Activated CD8-positive, alpha-beta memory T cell treated with anti-CD3 and anti-CD28 coated beads, Interleukin-2, amount 10 ng/mL, durations not matched to agents 7 days and 5 days (primary cell): ENCODE measurements at regions of chr14 and their contacts with region 1.

Region 1: GRCh38 chr14:22822571-22823098 is 7.1 kb upstream of the MRPL52 start:
- DNase-seq: peak; percentile 81
- ATAC-seq: peak; percentile 94
- H3K4me3 Mint-ChIP-seq: peak overlapping the region; percentile 30
- H3K27ac Mint-ChIP-seq: no peak overlapping the region
- H3K4me1 Mint-ChIP-seq: peaks cover 29% of the 10 kb centered on the region
- H3K27me3 Mint-ChIP-seq: peaks cover 28% of the 10 kb centered on the region

Region 2: GRCh38 chr14:22556990-22557623 is 265.5 kb before region 1 on chr14:
- CTCF ChIA-PET with region 1: interaction called, 11 read pairs
- DNase-seq: peak; percentile 95
- ATAC-seq: peak; percentile 34
- H3K4me3 Mint-ChIP-seq: peak overlapping the region; percentile 68
- H3K27ac Mint-ChIP-seq: peak overlapping the region; percentile 94
- H3K4me1 Mint-ChIP-seq: peaks cover 91% of the 10 kb centered on the region
- H3K27me3 Mint-ChIP-seq: peaks cover 3% of the 10 kb centered on the region

Region 3: GRCh38 chr14:22844221-22845102 is 21.8 kb after region 1 on chr14:
- CTCF ChIA-PET with region 1: interaction called, 239 read pairs
- DNase-seq: no peak
- ATAC-seq: no peak
- H3K4me3 Mint-ChIP-seq: no peak overlapping the region
- H3K27ac Mint-ChIP-seq: no peak overlapping the region
- H3K4me1 Mint-ChIP-seq: peaks cover 3% of the 10 kb centered on the region
- H3K27me3 Mint-ChIP-seq: peaks cover 5% of the 10 kb centered on the region

Region 4: GRCh38 chr14:22872033-22872832 is 49.6 kb after region 1 on chr14:
- CTCF ChIA-PET with region 1: interaction called, 30 read pairs
- DNase-seq: peak; percentile 80
- ATAC-seq: peak; percentile 43
- H3K4me3 Mint-ChIP-seq: peak overlapping the region; percentile 88
- H3K27ac Mint-ChIP-seq: peak overlapping the region; percentile 98
- H3K4me1 Mint-ChIP-seq: peaks cover 32% of the 10 kb centered on the region
- H3K27me3 Mint-ChIP-seq: no peaks in the 10 kb centered on the region

Region 5: DNA sequence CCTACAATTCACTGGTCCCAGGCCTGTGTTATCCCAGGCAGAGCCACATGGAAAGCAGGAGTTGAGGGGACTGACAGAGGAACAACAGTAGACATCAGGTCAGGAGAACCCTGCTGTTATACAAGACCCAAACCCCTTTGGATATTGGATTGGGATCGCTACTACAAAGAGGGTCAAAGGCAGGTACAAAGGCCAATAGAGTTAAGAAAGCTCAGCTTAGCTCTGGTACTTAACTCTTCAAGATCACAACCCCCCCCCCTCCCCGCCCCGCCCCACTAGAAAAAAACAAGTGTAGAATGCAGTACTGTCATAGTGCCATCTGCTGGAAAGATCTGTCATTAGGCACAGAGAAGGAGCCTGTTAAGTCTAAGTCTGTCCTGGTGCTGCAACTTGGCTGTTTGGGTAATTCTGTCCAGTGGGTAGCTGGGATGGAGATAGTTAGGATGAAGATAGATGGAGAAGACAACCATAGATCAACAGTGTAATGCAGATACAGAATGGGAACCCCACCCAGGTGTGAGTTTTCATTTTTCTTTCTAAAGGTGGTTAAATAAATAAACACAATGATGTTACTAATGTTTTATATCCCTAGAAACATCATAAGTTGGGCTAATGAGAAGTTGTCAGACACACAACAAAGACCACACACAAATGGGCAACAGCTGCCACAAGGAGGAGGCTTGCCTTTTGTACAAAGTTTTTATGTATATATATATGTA is 77.6 kb after region 1 on chr14:
- CTCF ChIA-PET with region 1: interaction called, 38 read pairs
- DNase-seq: peak; percentile 71
- ATAC-seq: peak; percentile 87
- H3K4me3 Mint-ChIP-seq: no peak overlapping the region
- H3K27ac Mint-ChIP-seq: peak overlapping the region; percentile 61
- H3K4me1 Mint-ChIP-seq: peaks cover 18% of the 10 kb centered on the region
- H3K27me3 Mint-ChIP-seq: no peaks in the 10 kb centered on the region